ENCODE measurements at regions of chr6 and their contacts with region 1.

Region 1: GRCh38 chr6:63272397-63272796 is 47.4 kb downstream of the LGSN start:
- DNase-seq: no peak
- ATAC-seq: peak; percentile 31; the same call in 1 of the 3 replicates
- H3K4me3 ChIP-seq: no peak overlapping the region
- H3K27ac ChIP-seq: no peak overlapping the region
- H3K4me1 ChIP-seq: no peaks in the 10 kb centered on the region; the same call in 1 of the 2 replicates
- H3K27me3 ChIP-seq: no peaks in the 10 kb centered on the region
- CTCF ChIP-seq: peak; percentile 10 to 56 (median 21); a peak in 4 of 6 replicates
- EP300 ChIP-seq: no peak
- POLR2A ChIP-seq: no peak
- RAD21 ChIP-seq: peak; percentile 67

Region 2: DNA sequence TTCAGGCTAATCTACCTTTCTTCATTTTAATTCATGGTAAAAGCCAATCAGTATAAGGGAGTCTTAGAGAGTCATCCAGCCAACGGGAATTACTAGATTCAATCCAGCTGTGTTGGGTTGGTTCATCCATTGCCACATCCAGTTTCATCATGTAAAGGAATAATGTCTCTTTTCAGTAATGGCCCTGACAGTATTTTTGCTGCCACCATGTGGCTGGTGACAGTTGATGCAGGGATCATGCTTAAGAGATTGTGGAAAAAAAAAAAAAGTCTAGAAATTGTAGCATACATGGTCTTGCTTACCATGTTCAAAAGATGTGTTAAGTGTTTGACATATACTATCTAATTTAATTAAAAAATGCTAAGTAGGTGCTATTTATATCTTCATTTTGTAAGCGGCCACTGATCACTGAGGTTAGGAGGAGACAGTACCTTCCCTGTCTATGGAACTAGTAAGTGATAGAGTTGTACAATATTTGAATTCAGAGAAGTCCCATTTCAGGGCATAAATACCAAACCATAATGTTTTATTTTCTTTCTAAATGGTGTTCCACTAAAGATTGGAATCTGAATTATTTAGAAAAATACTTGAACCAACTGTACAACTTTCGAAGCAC is 1122.2 kb before region 1 on chr6:
- CTCF ChIA-PET with region 1: interaction called, 6 read pairs
- POLR2A ChIA-PET with region 1: no interaction called
- RAD21 ChIA-PET with region 1: no interaction called
- SMC1A ChIA-PET with region 1: interaction called, 5 read pairs
- in situ Hi-C with region 1: no loop called
- intact Hi-C with region 1: loop called (anchors 10 kb)
- DNase-seq: no peak
- ATAC-seq: peak; percentile 69
- H3K4me3 ChIP-seq: no peak overlapping the region
- H3K27ac ChIP-seq: no peak overlapping the region
- H3K4me1 ChIP-seq: no peaks in the 10 kb centered on the region
- H3K27me3 ChIP-seq: no peaks in the 10 kb centered on the region
- CTCF ChIP-seq: peak; percentile 61 to 65 (median 64)
- EP300 ChIP-seq: no peak
- POLR2A ChIP-seq: no peak
- RAD21 ChIP-seq: peak; percentile 48

Region 3: DNA sequence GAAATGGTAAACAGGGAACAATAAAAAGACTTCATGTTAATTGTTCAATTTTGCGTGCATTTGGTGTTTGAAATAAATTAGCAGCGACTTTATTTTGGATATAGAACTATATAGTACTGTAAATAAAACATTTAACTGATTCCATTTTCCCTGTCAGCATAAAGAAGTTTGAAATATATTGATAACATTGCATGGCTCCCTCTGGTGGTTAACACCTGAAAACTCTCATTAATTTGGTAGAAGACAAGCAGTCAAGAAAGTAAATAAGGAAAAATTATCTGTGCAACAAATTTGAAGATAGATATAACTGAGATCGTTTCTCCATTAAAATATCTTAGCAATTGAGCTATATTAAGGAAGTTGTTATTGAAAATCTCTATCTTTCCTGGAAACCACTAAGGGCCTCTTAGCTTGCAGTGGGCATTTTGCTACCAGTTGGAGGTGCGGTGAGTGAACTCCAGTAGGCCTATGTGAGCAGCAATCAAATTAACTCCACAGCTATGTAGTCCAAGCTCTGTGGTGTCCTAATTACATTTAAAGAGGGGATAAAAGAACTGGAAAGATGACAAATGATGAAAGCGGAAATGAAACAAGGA is 496.9 kb before region 1 on chr6:
- CTCF ChIA-PET with region 1: interaction called, 5 read pairs
- POLR2A ChIA-PET with region 1: no interaction called
- RAD21 ChIA-PET with region 1: no interaction called
- SMC1A ChIA-PET with region 1: interaction called, 4 read pairs
- in situ Hi-C with region 1: no loop called
- intact Hi-C with region 1: loop called (anchors 5 kb)
- DNase-seq: no peak
- ATAC-seq: peak; percentile 67
- H3K4me3 ChIP-seq: no peak overlapping the region
- H3K27ac ChIP-seq: no peak overlapping the region
- H3K4me1 ChIP-seq: no peaks in the 10 kb centered on the region
- H3K27me3 ChIP-seq: no peaks in the 10 kb centered on the region
- CTCF ChIP-seq: peak; percentile 29 to 55 (median 43); a peak in 4 of 6 replicates
- EP300 ChIP-seq: no peak
- POLR2A ChIP-seq: no peak
- RAD21 ChIP-seq: peak; percentile 44; the same call in 1 of the 2 replicates

Region 4: DNA sequence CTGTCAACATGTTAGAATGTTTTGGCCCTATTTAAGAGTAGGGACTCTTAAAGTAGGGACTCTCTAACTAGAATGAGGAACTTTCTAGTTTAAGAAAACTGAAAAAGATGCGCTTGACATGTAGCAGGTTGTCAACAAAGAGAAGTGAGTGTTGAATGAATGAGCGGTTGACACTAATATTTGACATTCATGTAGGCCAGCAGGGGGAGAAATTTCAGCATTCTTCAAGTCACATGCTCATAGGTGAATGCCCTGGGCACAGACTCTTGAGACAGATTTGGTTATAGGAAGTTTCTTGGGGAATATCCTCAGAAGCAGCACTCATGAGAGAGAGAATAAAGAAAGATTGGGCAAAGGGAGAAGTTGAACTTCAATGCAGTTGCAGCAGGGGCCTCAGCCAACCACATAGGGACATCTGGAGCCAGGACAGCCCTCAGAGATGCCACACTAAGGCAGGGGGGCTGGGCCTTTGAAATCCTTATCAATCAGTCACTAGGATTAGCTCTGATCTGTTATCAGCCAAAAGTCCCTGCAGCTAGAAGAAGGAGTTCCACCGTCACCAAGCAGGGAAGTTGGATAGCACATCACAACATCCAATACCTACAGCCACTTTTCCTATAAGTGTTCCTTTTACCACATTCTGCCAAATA is 206.2 kb before region 1 on chr6:
- CTCF ChIA-PET with region 1: interaction called, 8 read pairs
- POLR2A ChIA-PET with region 1: no interaction called
- RAD21 ChIA-PET with region 1: interaction called, 10 read pairs
- SMC1A ChIA-PET with region 1: interaction called, 19 read pairs
- in situ Hi-C with region 1: loop called (anchors 10 kb)
- intact Hi-C with region 1: loop called (anchors 1 kb)
- DNase-seq: no peak
- ATAC-seq: peak; percentile 85
- H3K4me3 ChIP-seq: no peak overlapping the region
- H3K27ac ChIP-seq: no peak overlapping the region
- H3K4me1 ChIP-seq: no peaks in the 10 kb centered on the region
- H3K27me3 ChIP-seq: no peaks in the 10 kb centered on the region
- CTCF ChIP-seq: peak; percentile 29 to 48 (median 33); a peak in 5 of 6 replicates
- EP300 ChIP-seq: no peak
- POLR2A ChIP-seq: no peak
- RAD21 ChIP-seq: peak; percentile 43; the same call in 1 of the 2 replicates

Region 5: GRCh38 chr6:63236398-63236817 is 36.0 kb before region 1 on chr6:
- CTCF ChIA-PET with region 1: interaction called, 3 read pairs
- POLR2A ChIA-PET with region 1: no interaction called
- RAD21 ChIA-PET with region 1: no interaction called
- SMC1A ChIA-PET with region 1: interaction called, 5 read pairs
- in situ Hi-C with region 1: no loop called
- intact Hi-C with region 1: loop called (anchors 2 kb)
- DNase-seq: peak; percentile 2
- ATAC-seq: peak; percentile 94
- H3K4me3 ChIP-seq: no peak overlapping the region
- H3K27ac ChIP-seq: no peak overlapping the region
- H3K4me1 ChIP-seq: no peaks in the 10 kb centered on the region
- H3K27me3 ChIP-seq: no peaks in the 10 kb centered on the region
- CTCF ChIP-seq: no peak
- EP300 ChIP-seq: peak in 1 of 2 experiments; percentile 14; a peak in 1 of 4 replicates
- POLR2A ChIP-seq: no peak
- RAD21 ChIP-seq: no peak